ENCODE measurements at regions of chr3 and their contacts with region 1.

Region 1: GRCh38 chr3:14947886-14948555 is 638 bp downstream of the NR2C2 start:
- DNase-seq: peak; percentile 97
- ATAC-seq: peak; percentile 86 to 88
- H3K4me3 ChIP-seq: peak overlapping the region; percentile 66 to 98 (median 80)
- H3K27ac ChIP-seq: peak overlapping the region; percentile 96 to 99 (median 99)
- H3K4me1 ChIP-seq: peaks cover 34 to 42% of the 10 kb centered on the region in 2 donors
- H3K27me3 ChIP-seq: no peaks in the 10 kb centered on the region
- CTCF ChIP-seq: peak in 1 of 5 experiments; percentile 16
- POLR2A ChIP-seq: peak in 1 of 2 donors; percentile 1

Region 2: DNA sequence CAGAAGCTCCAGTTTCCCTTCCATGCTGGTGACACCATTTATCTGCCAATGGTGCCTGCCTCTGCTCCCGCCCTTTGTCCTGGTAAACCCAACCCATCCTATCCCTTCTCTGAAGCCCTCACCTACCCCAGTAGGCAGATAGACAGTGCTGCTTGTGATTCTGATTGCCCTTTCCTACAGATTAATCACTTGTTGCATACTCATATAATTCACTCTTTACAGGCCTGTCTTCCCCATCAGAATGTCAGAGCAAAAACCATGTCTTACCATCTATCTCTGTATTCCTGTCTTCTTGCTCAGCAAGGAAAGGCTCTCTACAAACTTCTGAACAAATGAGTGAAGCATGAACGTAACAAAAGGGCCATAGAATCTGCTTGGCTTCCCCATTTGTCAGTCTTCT is 69.2 kb after region 1 on chr3:
- in situ Hi-C with region 1: no loop called
- intact Hi-C with region 1: loop called (anchors 2 kb)
- DNase-seq: no peak
- ATAC-seq: no peak
- H3K4me3 ChIP-seq: no peak overlapping the region
- H3K27ac ChIP-seq: peak overlapping the region; percentile 63 to 91 (median 78)
- H3K4me1 ChIP-seq: peaks cover 9 to 25% of the 10 kb centered on the region in 2 donors
- H3K27me3 ChIP-seq: no peaks in the 10 kb centered on the region
- CTCF ChIP-seq: no peak
- POLR2A ChIP-seq: no peak

Region 3: GRCh38 chr3:15064835-15065549 is 117.0 kb after region 1 on chr3 and contains the start of gene MRPS25:
- in situ Hi-C with region 1: loop called in 2 of 4 experiments (anchors 25 kb)
- intact Hi-C with region 1: loop called (anchors 1 kb)
- DNase-seq: peak; percentile 87 to 91
- ATAC-seq: peak; percentile 93 to 94
- H3K4me3 ChIP-seq: peak within 1 kb of the TSS; percentile 74 to 99 (median 85)
- H3K27ac ChIP-seq: peak within 1 kb of the TSS; percentile 83 to 97 (median 94)
- H3K4me1 ChIP-seq: peaks cover 18 to 20% of the 10 kb centered on the region in 2 donors
- H3K27me3 ChIP-seq: no peaks in the 10 kb centered on the region
- CTCF ChIP-seq: no peak
- POLR2A ChIP-seq: peak; percentile 94
- total RNA-seq, gene MRPS25: 71.4 to 88.6 (median 73.9) TPM

Measured in gastrocnemius medialis (tissue), 4 donors.